Activated T-helper 1 cell treated with anti-CD3 and anti-CD28 coated beads, Interleukin-12 subunit alpha, Interleukin-12 subunit beta, Interleukin-2, Interleukin-4 antibody, amounts not matched to agents 30 ng/mL and 10 ng/mL and 1 ng/mL, durations not matched to agents 14 hours and 24 hours and 36 hours (primary cell): ENCODE measurements at regions of chr17 and their contacts with region 1.

Region 1: GRCh38 chr17:57849874-57850754 is at the start of gene MRPS23:
- DNase-seq: peak; percentile 96
- H3K4me3 Mint-ChIP-seq: peak within 1 kb of the TSS; percentile 99
- H3K27ac Mint-ChIP-seq: peak within 1 kb of the TSS; percentile 99
- H3K4me1 Mint-ChIP-seq: peaks cover 18% of the 10 kb centered on the region
- H3K27me3 Mint-ChIP-seq: no peaks in the 10 kb centered on the region
- total RNA-seq, gene MRPS23: 79.6 and 87.0 TPM in 2 replicates

Region 2: DNA sequence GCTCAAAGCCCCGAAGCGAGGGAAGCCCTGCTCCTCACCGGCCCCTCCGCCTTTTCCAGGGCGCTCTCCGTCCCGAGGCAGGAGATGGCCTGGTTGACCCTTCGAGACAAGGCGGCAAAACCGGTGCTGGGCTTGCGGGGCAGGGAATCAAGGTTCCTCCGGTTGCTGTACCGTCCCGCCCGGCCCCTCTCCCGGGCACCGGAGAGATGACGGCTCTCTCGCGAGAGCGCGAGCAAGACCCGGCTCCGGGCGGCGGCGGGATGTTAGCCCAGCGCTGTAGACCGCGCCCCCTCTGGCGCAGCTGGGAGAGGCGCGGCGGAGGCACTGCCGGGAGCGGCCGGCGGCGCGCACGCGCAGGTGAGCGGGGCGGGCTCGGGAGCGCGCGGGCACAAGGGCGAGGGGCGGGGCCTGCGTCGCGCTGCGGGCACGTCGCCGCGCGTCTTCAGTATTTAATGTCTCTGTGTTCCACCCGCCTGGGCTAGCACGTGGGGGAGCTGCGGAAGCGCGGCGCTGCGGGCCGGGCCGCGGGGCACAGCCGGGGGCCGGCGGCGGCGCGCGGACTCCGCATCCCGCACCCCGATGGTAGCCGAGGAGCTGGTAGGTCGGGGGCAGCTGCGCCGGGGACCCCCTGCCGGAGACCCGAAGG is 765.2 kb before region 1 on chr17 and contains the start of gene AKAP1:
- intact Hi-C with region 1: loop called (anchors 1 kb)
- DNase-seq: peak; percentile 96
- H3K4me3 Mint-ChIP-seq: peak within 1 kb of the TSS; percentile 92
- H3K27ac Mint-ChIP-seq: peak within 1 kb of the TSS; percentile 87
- H3K4me1 Mint-ChIP-seq: peaks cover 28% of the 10 kb centered on the region
- H3K27me3 Mint-ChIP-seq: peaks cover 9% of the 10 kb centered on the region
- total RNA-seq, gene AKAP1: 53.8 and 59.9 TPM in 2 replicates

Region 3: DNA sequence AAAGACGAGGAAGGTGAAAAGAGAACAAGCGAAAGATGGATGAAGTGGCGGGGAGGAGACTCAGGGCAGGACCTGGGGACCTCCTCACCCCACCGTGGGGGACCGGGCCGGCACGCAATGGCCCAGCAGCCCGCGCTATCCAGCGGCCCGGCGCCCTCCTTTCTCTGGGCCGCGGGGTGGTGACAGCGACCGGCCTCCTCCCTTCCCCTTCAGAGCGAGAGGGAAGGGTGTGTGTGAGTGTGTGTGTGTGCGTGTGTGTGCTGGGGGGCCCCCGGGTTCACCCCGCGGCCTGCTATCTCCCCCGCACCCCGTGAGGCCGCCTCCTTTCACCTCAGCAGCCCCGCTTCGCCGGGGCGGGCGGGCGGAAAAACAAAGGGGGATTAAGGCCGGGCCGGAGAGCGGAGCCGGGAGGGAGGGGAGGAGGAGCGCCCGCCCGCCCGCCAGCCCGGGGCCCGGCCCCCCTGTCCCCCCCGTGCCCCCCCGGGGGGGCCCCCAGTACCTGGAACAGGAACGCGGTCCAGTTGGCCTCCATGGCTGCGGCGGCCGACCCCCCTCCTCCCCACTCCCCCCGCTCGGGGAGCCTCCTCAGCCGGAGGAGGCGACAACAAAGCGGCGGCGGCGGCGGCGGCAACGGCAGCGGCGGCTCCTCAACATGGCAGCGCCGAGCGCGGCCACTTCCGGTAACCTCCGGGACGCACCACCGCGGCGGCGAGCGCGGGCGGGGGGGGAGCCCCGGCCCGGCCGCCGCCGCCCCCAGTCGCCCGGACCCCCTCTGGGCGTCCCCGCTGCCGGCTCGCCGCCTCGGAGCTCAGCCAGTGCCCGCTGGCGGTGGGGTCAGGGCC is 137.7 kb after region 1 on chr17 and contains the start of gene VEZF1:
- intact Hi-C with region 1: loop called (anchors 1 kb)
- DNase-seq: peak; percentile 72
- H3K4me3 Mint-ChIP-seq: peak within 1 kb of the TSS; percentile 93
- H3K27ac Mint-ChIP-seq: peak within 1 kb of the TSS; percentile 93
- H3K4me1 Mint-ChIP-seq: peaks cover 64% of the 10 kb centered on the region
- H3K27me3 Mint-ChIP-seq: no peaks in the 10 kb centered on the region
- total RNA-seq, gene VEZF1: 37.7 and 41.2 TPM in 2 replicates

Region 4: GRCh38 chr17:57995076-57995956 is 145.2 kb after region 1 on chr17:
- intact Hi-C with region 1: loop called (anchors 2 kb)
- DNase-seq: peak; percentile 22
- H3K4me3 Mint-ChIP-seq: no peak overlapping the region
- H3K27ac Mint-ChIP-seq: no peak overlapping the region
- H3K4me1 Mint-ChIP-seq: peaks cover 58% of the 10 kb centered on the region
- H3K27me3 Mint-ChIP-seq: no peaks in the 10 kb centered on the region

Region 5: DNA sequence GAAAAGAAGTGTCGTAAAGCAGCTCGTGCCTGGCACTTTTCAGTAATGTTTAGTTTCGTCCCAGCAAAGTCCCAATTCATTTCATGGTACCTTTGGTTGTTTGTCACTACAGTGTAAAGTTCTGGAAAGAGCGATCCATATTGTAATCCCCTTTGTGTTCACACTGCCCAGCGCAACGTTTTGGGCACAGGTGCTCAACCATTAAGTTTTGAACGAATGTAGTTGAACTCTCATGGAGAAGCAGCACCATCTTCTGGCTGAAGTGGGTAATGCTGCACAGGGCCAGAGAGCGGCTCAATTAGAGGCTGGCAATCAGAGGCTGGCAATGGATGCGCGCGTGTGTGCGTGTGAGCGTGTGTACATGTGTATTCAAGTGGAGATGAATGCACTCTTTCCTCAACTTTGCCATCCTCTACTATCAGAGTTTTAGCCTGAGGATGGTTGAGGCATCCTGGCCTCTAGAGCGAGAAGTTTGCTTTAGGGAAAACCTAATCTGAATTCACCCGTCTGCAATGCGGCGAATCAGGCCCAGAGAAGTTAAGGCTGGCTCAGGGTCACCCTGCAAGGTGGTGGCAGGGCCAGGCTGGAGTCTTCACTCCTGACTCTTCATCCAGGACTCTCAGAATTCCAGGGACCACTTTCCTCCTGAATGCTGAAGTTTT is 263.0 kb after region 1 on chr17:
- intact Hi-C with region 1: loop called (anchors 2 kb)
- DNase-seq: peak; percentile 70
- H3K4me3 Mint-ChIP-seq: no peak overlapping the region
- H3K27ac Mint-ChIP-seq: no peak overlapping the region
- H3K4me1 Mint-ChIP-seq: peaks cover 6% of the 10 kb centered on the region
- H3K27me3 Mint-ChIP-seq: peaks cover 11% of the 10 kb centered on the region

Region 6: DNA sequence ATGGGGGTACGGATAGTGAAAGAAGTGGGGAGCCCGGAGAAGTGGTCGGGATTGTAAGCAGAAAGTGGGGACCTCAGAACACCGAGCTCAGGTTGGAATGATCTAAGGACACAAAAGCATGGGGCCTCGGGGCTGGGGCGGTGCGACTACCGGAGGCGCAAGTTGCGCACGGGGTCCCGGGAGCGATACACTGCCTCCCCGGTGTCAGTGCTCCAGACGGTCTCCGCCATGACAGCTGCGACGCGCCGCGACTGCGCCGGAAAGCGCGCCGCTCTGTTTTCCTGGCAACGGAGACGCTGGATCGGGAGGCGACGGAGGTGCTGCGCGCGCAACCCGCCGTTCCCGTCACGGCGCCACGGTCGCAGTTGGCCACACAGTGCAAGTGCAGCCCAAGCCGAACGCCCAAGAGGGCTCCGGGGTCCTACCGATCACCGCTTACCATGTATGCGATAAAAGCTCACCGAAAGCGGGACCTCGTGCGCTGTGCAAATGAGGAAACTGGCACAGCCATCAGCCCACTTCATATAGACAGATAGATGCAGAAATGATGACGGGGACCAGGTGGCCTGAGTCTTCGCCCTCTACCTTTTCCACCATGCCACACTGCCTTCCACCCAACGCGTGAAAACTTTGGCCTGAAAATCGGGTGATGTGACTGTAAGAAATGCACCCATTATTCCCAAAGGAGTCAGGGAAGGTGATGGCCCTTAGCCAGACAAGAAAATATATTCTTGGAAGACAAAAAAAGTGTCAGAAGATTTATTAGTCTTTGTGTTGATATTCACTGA is 369.1 kb after region 1 on chr17 and contains the start of gene MKS1:
- intact Hi-C with region 1: loop called (anchors 1 kb)
- DNase-seq: peak; percentile 94
- H3K4me3 Mint-ChIP-seq: peak within 1 kb of the TSS; percentile 92
- H3K27ac Mint-ChIP-seq: peak within 1 kb of the TSS; percentile 96
- H3K4me1 Mint-ChIP-seq: peaks cover 26% of the 10 kb centered on the region
- H3K27me3 Mint-ChIP-seq: peaks cover 11% of the 10 kb centered on the region
- total RNA-seq, gene MKS1: 18.8 and 23.3 TPM in 2 replicates